CD4-positive, alpha-beta T cell (primary cell): ENCODE measurements at regions of chr16 and their contacts with region 1.

Region 1: DNA sequence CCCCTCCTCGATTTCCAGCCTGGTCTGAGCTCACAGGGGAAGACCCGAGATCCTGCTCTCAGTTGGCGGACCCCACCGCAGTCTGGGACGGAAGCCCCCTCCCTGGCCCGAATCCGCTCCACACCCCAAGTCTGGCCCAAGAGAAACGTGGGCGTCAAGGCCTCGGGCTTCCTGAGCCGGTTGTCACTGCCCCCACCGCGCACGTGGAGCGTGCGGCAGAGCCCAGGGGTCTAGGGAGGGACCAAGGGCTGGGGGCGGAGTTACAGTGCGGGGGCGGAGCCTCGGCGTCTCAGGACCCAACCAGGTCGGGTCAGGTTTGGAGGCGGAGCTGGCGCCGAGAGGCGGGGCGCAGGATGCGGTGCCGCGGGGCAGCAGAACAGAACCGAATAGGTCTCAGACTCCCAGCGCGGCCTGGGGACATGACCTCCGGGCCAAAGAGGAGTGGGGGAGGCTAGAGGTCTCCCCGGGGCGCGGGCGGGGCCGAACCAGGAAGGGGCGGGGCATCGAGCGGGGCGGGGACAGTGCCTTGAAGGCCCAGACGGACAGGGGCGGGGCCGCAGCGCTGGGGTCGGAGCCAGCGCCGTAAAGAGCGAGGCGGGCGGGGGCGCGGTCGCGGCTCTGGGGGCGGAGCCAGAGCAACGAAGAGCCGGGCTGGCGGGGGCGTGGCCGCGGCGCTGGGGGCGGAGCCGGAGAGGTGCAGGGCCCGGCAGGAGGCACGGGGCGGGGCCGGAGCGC is 431 bp upstream of the ZFPM1 start:
- DNase-seq: peak; percentile 95 to 100 (median 99)
- ATAC-seq: peak; percentile 71
- H3K4me3 ChIP-seq: peak overlapping the region; percentile 65
- H3K4me3 Mint-ChIP-seq: peak overlapping the region; percentile 90
- H3K27ac ChIP-seq: peak overlapping the region in 1 of 2 donors; percentile 48
- H3K27ac Mint-ChIP-seq: peak overlapping the region; percentile 90
- H3K4me1 ChIP-seq: peaks cover 43% of the 10 kb centered on the region
- H3K4me1 Mint-ChIP-seq: peaks cover 24% of the 10 kb centered on the region
- H3K27me3 ChIP-seq: no peaks in the 10 kb centered on the region
- H3K27me3 Mint-ChIP-seq: no peaks in the 10 kb centered on the region
- CTCF ChIP-seq: no peak

Region 2: GRCh38 chr16:87387942-87388817 is 1064.5 kb before region 1 on chr16:
- CTCF ChIA-PET with region 1: no interaction called
- POLR2A ChIA-PET with region 1: no interaction called
- intact Hi-C with region 1: loop called in 1 of 2 experiments (anchors 10 kb)
- DNase-seq: peak; percentile 74 to 97 (median 82)
- ATAC-seq: peak; percentile 71
- H3K4me3 ChIP-seq: peak overlapping the region; percentile 8
- H3K4me3 Mint-ChIP-seq: peak overlapping the region; percentile 79
- H3K27ac ChIP-seq: peak overlapping the region; percentile 70 to 82
- H3K27ac Mint-ChIP-seq: peak overlapping the region; percentile 98
- H3K4me1 ChIP-seq: peaks cover 49% of the 10 kb centered on the region
- H3K4me1 Mint-ChIP-seq: peaks cover 49% of the 10 kb centered on the region
- H3K27me3 ChIP-seq: no peaks in the 10 kb centered on the region
- H3K27me3 Mint-ChIP-seq: peaks cover 4% of the 10 kb centered on the region
- CTCF ChIP-seq: no peak

Region 3: GRCh38 chr16:87484487-87485331 is 967.9 kb before region 1 on chr16:
- CTCF ChIA-PET with region 1: no interaction called
- POLR2A ChIA-PET with region 1: no interaction called
- intact Hi-C with region 1: no loop called
- DNase-seq: no peak
- ATAC-seq: no peak
- H3K4me3 ChIP-seq: no peak overlapping the region
- H3K4me3 Mint-ChIP-seq: peak overlapping the region; percentile 35
- H3K27ac ChIP-seq: no peak overlapping the region
- H3K27ac Mint-ChIP-seq: peak overlapping the region; percentile 52
- H3K4me1 ChIP-seq: peaks cover 29% of the 10 kb centered on the region
- H3K4me1 Mint-ChIP-seq: peaks cover 82% of the 10 kb centered on the region
- H3K27me3 ChIP-seq: no peaks in the 10 kb centered on the region
- H3K27me3 Mint-ChIP-seq: no peaks in the 10 kb centered on the region
- CTCF ChIP-seq: no peak

Region 4: GRCh38 chr16:88479793-88480760 is 27.4 kb after region 1 on chr16:
- CTCF ChIA-PET with region 1: no interaction called
- POLR2A ChIA-PET with region 1: interaction called, 3 read pairs
- intact Hi-C with region 1: loop called in 1 of 2 experiments (anchors 2 kb)
- DNase-seq: peak in 11 of 14 experiments; percentile 26 to 71 (median 41)
- ATAC-seq: peak; percentile 42
- H3K4me3 ChIP-seq: no peak overlapping the region
- H3K4me3 Mint-ChIP-seq: peak overlapping the region; percentile 62
- H3K27ac ChIP-seq: no peak overlapping the region
- H3K27ac Mint-ChIP-seq: peak overlapping the region; percentile 30
- H3K4me1 ChIP-seq: peaks cover 56% of the 10 kb centered on the region
- H3K4me1 Mint-ChIP-seq: peaks cover 39% of the 10 kb centered on the region
- H3K27me3 ChIP-seq: no peaks in the 10 kb centered on the region
- H3K27me3 Mint-ChIP-seq: no peaks in the 10 kb centered on the region
- CTCF ChIP-seq: no peak

Region 5: GRCh38 chr16:88569985-88570690 is 117.5 kb after region 1 on chr16 and contains the start of gene ZC3H18:
- CTCF ChIA-PET with region 1: no interaction called
- POLR2A ChIA-PET with region 1: interaction called, 4 read pairs
- intact Hi-C with region 1: loop called in 1 of 2 experiments (anchors 1 kb)
- DNase-seq: peak; percentile 93 to 100 (median 98)
- ATAC-seq: peak; percentile 93
- H3K4me3 ChIP-seq: peak within 1 kb of the TSS; percentile 65
- H3K4me3 Mint-ChIP-seq: peak within 1 kb of the TSS; percentile 88
- H3K27ac ChIP-seq: peak within 1 kb of the TSS; percentile 75 to 78
- H3K27ac Mint-ChIP-seq: peak within 1 kb of the TSS; percentile 87
- H3K4me1 ChIP-seq: peaks cover 31% of the 10 kb centered on the region
- H3K4me1 Mint-ChIP-seq: peaks cover 33% of the 10 kb centered on the region
- H3K27me3 ChIP-seq: no peaks in the 10 kb centered on the region
- H3K27me3 Mint-ChIP-seq: no peaks in the 10 kb centered on the region
- CTCF ChIP-seq: no peak
- total RNA-seq, gene ZC3H18: 92.6 to 93.7 TPM

Region 6: GRCh38 chr16:88706288-88706964 is 253.8 kb after region 1 on chr16 and contains the starts of genes CTU2 and RNF166:
- CTCF ChIA-PET with region 1: no interaction called
- POLR2A ChIA-PET with region 1: no interaction called
- intact Hi-C with region 1: loop called (anchors 2 to 10 kb)
- DNase-seq: peak; percentile 81 to 98 (median 90)
- ATAC-seq: peak; percentile 62
- H3K4me3 ChIP-seq: peak within 1 kb of the TSS; percentile 88
- H3K4me3 Mint-ChIP-seq: peak within 1 kb of the TSS; percentile 99
- H3K27ac ChIP-seq: peak within 1 kb of the TSS; percentile 93 to 96
- H3K27ac Mint-ChIP-seq: peak within 1 kb of the TSS; percentile 100
- H3K4me1 ChIP-seq: peaks cover 56% of the 10 kb centered on the region
- H3K4me1 Mint-ChIP-seq: peaks cover 53% of the 10 kb centered on the region
- H3K27me3 ChIP-seq: no peaks in the 10 kb centered on the region
- H3K27me3 Mint-ChIP-seq: no peaks in the 10 kb centered on the region
- CTCF ChIP-seq: no peak
- total RNA-seq, gene CTU2: 39.3 to 44.0 TPM
- total RNA-seq, gene RNF166: 334 to 355 TPM

Region 7: DNA sequence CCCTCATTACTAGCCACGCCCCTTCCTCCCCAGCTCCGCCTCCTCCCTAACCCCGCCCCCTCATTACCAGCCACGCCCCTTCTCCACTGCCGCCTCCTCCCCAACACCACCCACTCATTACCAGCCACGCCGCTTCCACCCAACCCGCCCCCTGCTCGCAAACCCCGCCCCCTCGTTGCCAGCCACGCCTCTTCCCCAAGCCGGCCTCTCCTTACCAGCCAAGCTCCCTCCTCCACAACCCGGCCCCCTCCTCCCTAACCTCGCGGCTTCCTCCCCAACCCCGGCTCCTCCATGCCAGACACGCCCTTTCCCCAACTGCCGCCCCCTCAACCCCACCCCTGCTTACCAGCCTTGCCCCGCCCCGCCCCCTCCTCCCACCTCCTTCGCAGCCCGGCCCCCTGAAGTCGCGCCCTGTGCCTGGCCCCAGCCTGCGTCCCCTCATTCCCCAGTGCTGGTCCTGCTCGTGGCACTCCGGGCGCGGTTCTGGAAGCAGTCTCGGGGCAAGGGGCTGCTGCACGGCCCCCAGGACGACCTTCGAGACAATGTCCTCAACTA is 740.4 kb after region 1 on chr16:
- CTCF ChIA-PET with region 1: no interaction called
- POLR2A ChIA-PET with region 1: no interaction called
- intact Hi-C with region 1: loop called in 1 of 2 experiments (anchors 5 kb)
- DNase-seq: peak in 6 of 14 experiments; percentile 26 to 80 (median 60)
- ATAC-seq: peak; percentile 50
- H3K4me3 ChIP-seq: no peak overlapping the region
- H3K4me3 Mint-ChIP-seq: no peak overlapping the region
- H3K27ac ChIP-seq: no peak overlapping the region
- H3K27ac Mint-ChIP-seq: no peak overlapping the region
- H3K4me1 ChIP-seq: peaks cover 18% of the 10 kb centered on the region
- H3K4me1 Mint-ChIP-seq: peaks cover 4% of the 10 kb centered on the region
- H3K27me3 ChIP-seq: no peaks in the 10 kb centered on the region
- H3K27me3 Mint-ChIP-seq: peaks cover 5% of the 10 kb centered on the region
- CTCF ChIP-seq: no peak